Tibial artery (tissue), 4 donors: ENCODE measurements at regions of chr1 and their contacts with region 1.

Region 1: GRCh38 chr1:19861034-19861433 is 21.2 kb upstream of the OTUD3 start:
- DNase-seq: no peak
- H3K4me3 ChIP-seq: no peak overlapping the region
- H3K27ac ChIP-seq: no peak overlapping the region
- H3K4me1 ChIP-seq: no peaks in the 10 kb centered on the region
- H3K27me3 ChIP-seq: peaks cover 0 to 4% of the 10 kb centered on the region in 2 donors
- CTCF ChIP-seq: no peak

Region 2: GRCh38 chr1:18352636-18353265 is 1508.3 kb before region 1 on chr1:
- intact Hi-C with region 1: loop called (anchors 5 kb)
- DNase-seq: no peak
- H3K4me3 ChIP-seq: no peak overlapping the region
- H3K27ac ChIP-seq: no peak overlapping the region
- H3K4me1 ChIP-seq: no peaks in the 10 kb centered on the region
- H3K27me3 ChIP-seq: peaks cover 0 to 59% of the 10 kb centered on the region in 2 donors
- CTCF ChIP-seq: no peak

Region 3: GRCh38 chr1:19988267-19989006 is 127.4 kb after region 1 on chr1:
- intact Hi-C with region 1: no loop called
- DNase-seq: no peak
- H3K4me3 ChIP-seq: no peak overlapping the region
- H3K27ac ChIP-seq: no peak overlapping the region
- H3K4me1 ChIP-seq: no peaks in the 10 kb centered on the region
- H3K27me3 ChIP-seq: no peaks in the 10 kb centered on the region
- CTCF ChIP-seq: no peak